GM12878 (cell line): ENCODE measurements at regions of chr15 and their contacts with region 1.

Region 1: DNA sequence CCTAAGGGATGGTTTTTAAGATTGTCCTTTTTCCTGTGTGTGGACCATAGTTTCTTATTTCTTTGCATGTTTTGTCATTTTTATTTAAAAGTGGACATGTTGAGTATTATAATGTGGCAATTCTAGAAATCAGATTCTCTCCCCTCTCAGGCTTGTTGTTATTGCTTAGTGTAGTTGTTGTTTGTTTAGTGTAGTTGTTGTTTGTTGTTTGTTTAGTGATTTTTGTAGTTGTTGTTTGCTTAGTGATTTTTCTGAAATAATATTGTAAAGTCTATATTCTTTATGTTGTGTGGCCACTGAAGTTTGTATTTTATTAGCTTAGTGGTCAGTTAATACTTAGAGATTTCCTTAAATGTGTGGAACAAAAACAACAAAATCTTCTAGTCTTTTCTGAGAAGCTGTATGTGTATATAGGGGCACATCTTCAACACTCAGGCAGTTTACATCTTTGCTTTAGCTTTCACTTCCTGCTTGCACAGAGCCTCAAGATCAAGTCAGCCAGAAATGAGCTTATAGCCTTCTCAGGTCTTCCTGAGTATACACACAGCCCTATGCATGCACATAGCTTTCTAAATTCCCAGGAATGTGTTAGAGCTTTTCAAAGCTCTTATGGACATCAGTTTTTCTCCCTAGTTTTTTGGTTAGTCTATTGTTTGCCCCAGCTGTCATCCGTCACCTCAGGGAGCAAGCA is 22.3 kb upstream of the MTMR10 start:
- DNase-seq: peak; percentile 65
- ATAC-seq: peak; percentile 100
- H3K4me3 ChIP-seq: no peak overlapping the region
- H3K27ac ChIP-seq: peak overlapping the region; percentile 75
- H3K4me1 ChIP-seq: peaks cover 17% of the 10 kb centered on the region
- H3K27me3 ChIP-seq: no peaks in the 10 kb centered on the region
- CTCF ChIP-seq: no peak
- EP300 ChIP-seq: no peak
- POLR2A ChIP-seq: peak; percentile 40; the same call in 1 of the 2 replicates
- RAD21 ChIP-seq: no peak

Region 2: GRCh38 chr15:31027910-31028578 is 14.4 kb after region 1 on chr15:
- CTCF ChIA-PET with region 1: interaction called, 4 read pairs
- POLR2A ChIA-PET with region 1: interaction called, 3 read pairs
- RAD21 ChIA-PET with region 1: interaction called, 4 read pairs
- SMC1A ChIA-PET with region 1: interaction called, 12 read pairs
- in situ Hi-C with region 1: no loop called
- intact Hi-C with region 1: no loop called
- DNase-seq: no peak
- ATAC-seq: no peak
- H3K4me3 ChIP-seq: no peak overlapping the region
- H3K27ac ChIP-seq: no peak overlapping the region
- H3K4me1 ChIP-seq: peaks cover 7% of the 10 kb centered on the region
- H3K27me3 ChIP-seq: no peaks in the 10 kb centered on the region
- CTCF ChIP-seq: no peak
- EP300 ChIP-seq: no peak
- POLR2A ChIP-seq: no peak
- RAD21 ChIP-seq: no peak

Region 3: GRCh38 chr15:31045606-31046005 is 31.9 kb after region 1 on chr15:
- CTCF ChIA-PET with region 1: no interaction called
- POLR2A ChIA-PET with region 1: no interaction called
- RAD21 ChIA-PET with region 1: no interaction called
- SMC1A ChIA-PET with region 1: no interaction called
- in situ Hi-C with region 1: no loop called
- intact Hi-C with region 1: no loop called
- DNase-seq: no peak
- ATAC-seq: no peak
- H3K4me3 ChIP-seq: no peak overlapping the region
- H3K27ac ChIP-seq: no peak overlapping the region
- H3K4me1 ChIP-seq: peaks cover 5% of the 10 kb centered on the region; the same call in 1 of the 2 replicates
- H3K27me3 ChIP-seq: no peaks in the 10 kb centered on the region
- CTCF ChIP-seq: no peak
- EP300 ChIP-seq: no peak
- POLR2A ChIP-seq: no peak
- RAD21 ChIP-seq: no peak

Region 4: DNA sequence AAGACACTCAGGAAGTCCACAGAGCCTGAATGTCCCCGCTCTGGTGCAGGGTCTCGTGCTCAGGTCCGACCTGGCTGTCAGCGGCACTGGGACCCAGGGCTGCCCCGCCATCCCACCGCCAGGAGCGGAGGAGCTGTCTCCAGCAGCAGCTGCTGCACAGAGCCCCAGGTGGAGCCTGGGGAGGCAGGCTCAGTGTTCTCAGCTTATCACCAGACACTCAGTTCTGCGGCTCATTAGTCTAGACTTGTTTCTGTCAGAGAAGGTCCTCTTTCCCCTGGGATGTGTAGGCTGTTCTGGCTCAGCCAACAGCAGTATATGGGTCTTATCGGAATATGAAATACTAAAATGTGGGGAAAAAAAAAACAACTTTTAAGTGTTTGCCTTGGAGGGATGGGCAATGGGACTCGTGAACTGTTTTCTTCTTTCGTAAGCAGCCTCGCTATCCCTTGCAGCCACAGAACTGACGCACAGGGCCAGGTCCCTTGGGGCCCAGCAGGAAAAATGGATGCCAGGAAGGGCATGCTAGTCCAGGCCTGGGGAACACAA is 388.9 kb after region 1 on chr15:
- CTCF ChIA-PET with region 1: no interaction called
- POLR2A ChIA-PET with region 1: no interaction called
- RAD21 ChIA-PET with region 1: no interaction called
- SMC1A ChIA-PET with region 1: no interaction called
- in situ Hi-C with region 1: no loop called
- intact Hi-C with region 1: no loop called
- DNase-seq: no peak
- ATAC-seq: no peak
- H3K4me3 ChIP-seq: no peak overlapping the region
- H3K27ac ChIP-seq: no peak overlapping the region
- H3K4me1 ChIP-seq: no peaks in the 10 kb centered on the region; the same call in 1 of the 2 replicates
- H3K27me3 ChIP-seq: no peaks in the 10 kb centered on the region
- CTCF ChIP-seq: no peak
- EP300 ChIP-seq: no peak
- POLR2A ChIP-seq: no peak
- RAD21 ChIP-seq: no peak